A673 (cell line): ENCODE measurements at regions of chr9 and their contacts with region 1.

Region 1: GRCh38 chr9:77194423-77194822 is 17.1 kb downstream of the VPS13A start:
- DNase-seq: no peak
- H3K4me3 ChIP-seq: no peak overlapping the region
- H3K27ac ChIP-seq: no peak overlapping the region
- H3K4me1 ChIP-seq: no peaks in the 10 kb centered on the region
- H3K27me3 ChIP-seq: no peaks in the 10 kb centered on the region
- CTCF ChIP-seq: no peak

Region 2: GRCh38 chr9:77142366-77142765 is 52.1 kb before region 1 on chr9:
- CTCF ChIA-PET with region 1: no interaction called
- POLR2A ChIA-PET with region 1: no interaction called
- intact Hi-C with region 1: no loop called
- DNase-seq: no peak
- H3K4me3 ChIP-seq: no peak overlapping the region
- H3K27ac ChIP-seq: no peak overlapping the region
- H3K4me1 ChIP-seq: no peaks in the 10 kb centered on the region
- H3K27me3 ChIP-seq: peaks cover 28% of the 10 kb centered on the region
- CTCF ChIP-seq: no peak

Region 3: DNA sequence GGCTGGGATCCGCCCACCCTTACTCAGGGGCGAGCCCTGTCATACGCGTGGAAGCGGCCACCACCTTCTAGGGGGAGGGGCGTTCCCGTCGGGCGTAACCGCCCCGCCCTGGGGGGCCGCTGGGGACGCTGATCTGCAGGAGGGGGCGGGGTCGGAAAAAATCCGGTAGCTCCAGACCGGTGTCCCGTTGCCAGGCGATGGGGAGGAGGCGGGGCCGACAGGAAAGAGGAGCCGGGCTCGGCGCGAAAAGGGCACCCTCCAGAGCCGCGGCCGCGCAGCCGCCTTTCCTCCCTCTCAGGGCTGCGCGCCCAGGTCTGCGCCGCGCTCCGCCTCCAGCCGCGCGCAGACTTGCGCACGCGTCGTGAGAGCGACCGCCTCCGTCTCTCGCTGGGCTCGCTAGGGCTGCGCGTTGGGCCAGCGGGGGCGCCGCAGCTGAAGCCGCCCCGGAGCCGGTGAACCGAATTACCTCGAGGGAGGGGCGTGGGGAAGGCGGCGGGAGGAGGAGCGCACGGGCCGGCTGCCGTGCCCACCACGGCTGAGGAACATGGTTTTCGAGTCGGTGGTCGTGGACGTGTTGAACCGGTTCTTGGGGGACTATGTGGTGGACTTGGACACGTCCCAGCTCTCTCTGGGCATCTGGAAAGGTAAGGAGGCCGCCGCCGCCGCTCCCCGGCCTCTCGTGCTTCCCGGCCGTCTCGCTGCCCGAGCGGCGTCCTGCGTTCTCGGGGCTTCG is 17.1 kb before region 1 on chr9 and contains the start of gene VPS13A:
- CTCF ChIA-PET with region 1: no interaction called
- POLR2A ChIA-PET with region 1: no interaction called
- intact Hi-C with region 1: loop called (anchors 1 kb)
- DNase-seq: peak; percentile 98
- H3K4me3 ChIP-seq: peak within 1 kb of the TSS; percentile 89
- H3K27ac ChIP-seq: peak within 1 kb of the TSS; percentile 70
- H3K4me1 ChIP-seq: peaks cover 12% of the 10 kb centered on the region
- H3K27me3 ChIP-seq: peaks cover 4% of the 10 kb centered on the region
- CTCF ChIP-seq: peak; percentile 41; the same call in 1 of the 2 replicates
- total RNA-seq, gene VPS13A: 32.2 and 39.5 TPM in 2 replicates